ENCODE measurements at regions of chr17 and their contacts with region 1.

Region 1: DNA sequence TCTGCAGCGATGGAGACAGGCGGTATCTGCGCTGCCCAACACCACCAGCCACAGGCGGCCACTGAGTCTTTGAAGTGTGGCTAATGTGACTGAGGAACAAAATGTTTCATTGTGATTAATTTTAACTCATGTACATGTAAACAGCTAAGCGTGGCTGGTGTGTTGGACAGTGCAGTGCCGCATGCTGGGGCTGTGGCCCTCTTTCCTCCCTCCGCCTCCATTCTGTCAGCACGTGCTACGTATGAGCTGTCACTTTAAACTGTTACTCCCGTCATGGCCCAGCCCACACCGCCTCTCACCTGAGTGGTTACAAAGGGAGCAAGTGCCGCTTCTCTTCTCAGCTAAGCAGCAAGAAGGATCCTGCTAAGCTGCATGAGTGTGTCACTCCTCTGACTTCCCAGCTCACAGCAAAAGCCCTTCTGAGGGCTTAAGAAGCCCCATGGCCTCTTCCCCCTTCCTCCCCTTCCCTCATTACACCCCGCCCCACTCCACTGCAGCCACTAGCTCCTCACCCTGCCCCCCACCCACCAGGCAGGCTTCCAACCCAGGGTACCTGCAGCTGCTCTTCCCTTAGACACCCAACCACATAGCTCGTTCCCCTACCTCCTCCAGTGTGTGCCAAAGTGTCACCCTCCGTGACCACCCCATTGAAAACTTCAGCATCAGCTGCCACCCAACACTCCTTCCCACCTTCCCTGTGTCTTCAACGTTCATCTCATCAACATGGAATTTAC is 15.0 kb downstream of the HASPIN start:
- DNase-seq: no peak
- CTCF ChIP-seq: no peak

Region 2: DNA sequence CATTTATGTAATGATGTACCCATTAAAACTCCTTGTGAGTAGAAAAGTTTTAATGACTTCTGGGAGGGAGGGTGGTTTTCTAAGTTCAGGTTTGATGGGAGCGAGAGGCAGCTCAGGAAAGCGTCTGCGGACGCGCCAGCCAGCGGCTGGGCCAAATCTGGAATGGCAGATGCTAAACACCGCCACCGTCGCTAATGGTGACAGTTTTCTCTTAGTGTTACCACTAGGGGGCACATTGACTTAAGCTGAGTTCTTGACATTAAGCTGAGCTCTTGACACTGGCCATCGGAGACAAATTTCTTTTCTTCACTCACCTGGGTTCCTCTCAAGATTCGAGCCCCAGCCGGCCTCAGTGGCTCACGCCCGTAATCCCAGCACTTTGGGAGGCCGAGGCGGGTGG is 136.2 kb before region 1 on chr17:
- CTCF ChIA-PET with region 1: no interaction called
- POLR2A ChIA-PET with region 1: no interaction called
- DNase-seq: no peak
- CTCF ChIP-seq: peak; percentile 43

Region 3: DNA sequence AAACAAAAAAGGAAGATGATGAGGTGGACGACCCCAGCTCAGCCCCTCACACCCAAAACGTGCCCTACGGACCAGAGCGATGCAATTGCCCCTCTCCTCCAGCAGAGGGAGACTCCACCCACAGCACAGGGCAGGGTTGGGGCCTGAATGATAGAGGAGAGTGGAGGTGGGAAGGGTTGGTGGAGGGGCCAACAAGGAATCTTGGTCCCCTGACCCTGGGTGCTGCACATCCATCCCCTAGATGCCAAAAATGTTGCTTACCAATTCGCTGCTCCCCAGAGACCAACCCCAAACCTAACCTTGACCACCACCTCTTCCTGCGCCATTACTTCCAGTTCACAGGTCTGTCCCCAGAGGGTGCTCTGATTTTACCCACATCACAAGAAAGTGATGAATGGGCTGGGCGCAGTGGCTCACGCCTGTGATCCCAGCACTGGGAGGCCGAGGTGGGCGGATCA is 55.6 kb before region 1 on chr17:
- CTCF ChIA-PET with region 1: interaction called, 11 read pairs
- POLR2A ChIA-PET with region 1: no interaction called
- DNase-seq: peak; percentile 84
- CTCF ChIP-seq: peak; percentile 96

Region 4: DNA sequence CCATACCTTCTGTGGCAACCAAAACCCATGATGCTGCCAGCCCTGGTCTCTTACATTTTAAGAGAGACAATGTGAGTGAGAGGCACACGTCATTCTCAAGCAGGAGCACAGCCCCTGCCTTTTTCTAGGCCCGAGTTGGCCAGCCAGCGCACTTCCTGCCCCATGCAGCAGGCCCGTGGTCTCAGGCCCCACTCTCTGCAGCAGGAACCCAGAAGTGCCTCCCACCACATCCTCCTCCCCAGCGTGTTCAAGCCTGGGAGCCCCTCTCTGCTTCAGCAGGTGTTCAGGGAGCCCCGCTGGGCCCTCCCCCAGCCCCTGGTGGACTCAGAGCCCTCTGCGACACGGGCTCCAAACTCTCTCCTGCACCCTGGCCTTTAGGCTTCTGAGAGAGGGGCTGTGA is 31.7 kb after region 1 on chr17:
- CTCF ChIA-PET with region 1: interaction called, 13 read pairs
- POLR2A ChIA-PET with region 1: no interaction called
- DNase-seq: peak; percentile 52
- CTCF ChIP-seq: no peak

Region 5: DNA sequence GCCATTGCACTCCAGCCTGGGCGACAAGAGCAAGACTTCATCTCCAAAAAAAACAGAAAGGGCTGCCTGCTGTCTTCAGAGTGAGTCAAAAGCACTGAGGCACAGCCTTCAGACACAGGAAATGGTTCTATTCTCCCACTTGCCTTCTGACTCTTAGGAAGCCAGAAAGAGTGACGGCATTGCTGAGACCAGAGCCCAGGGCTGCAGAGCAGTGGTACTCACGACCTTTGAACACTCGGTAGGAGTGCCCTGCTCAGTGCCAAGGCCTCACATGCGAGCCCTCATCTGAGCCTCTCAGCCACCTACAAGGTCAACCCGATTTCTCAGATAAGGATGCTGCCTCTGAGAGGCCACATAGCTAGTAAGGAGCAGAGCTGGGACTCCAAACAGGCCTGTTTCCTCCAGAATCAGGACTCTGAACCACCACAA is 65.8 kb after region 1 on chr17:
- CTCF ChIA-PET with region 1: interaction called, 43 read pairs
- POLR2A ChIA-PET with region 1: no interaction called
- DNase-seq: peak; percentile 78
- CTCF ChIP-seq: no peak

Region 6: DNA sequence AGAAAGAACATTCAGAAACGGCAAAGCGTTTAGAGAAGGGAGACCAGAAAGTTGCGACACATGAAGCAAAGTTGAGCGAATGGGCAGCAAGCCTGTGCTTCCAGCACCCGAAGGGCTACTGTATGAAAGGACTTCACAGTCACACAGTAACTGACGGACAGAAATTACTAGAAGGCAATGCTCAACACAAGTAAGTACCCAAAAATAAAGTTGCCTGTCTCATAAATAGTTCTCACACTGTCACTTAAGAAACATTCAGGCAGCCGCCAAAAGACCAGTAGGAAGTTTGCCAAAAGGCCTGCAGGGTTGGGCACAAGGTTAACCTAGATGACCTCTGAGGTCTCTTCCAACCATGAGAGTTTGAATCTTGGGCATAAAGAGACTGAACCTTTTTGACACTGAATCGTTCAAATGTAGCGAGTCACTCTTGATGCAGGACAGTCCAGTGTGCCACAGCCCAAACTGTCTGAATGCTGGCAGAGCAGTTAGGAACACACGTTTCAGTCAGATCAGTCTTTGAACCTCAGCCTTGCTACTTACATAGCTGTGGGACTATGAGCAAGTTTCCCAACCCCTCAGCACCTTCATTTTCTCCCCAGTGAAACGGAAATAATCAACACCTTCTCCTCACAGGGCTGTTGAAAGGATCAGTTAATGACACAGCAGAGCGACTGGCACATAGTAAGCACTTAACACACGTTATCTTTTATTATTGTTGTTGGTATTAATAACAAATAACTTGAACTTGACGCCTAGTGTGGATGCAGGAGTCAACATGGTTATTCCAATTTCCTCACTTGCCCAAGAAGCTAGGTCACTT is 96.9 kb after region 1 on chr17:
- CTCF ChIA-PET with region 1: interaction called, 217 read pairs
- POLR2A ChIA-PET with region 1: no interaction called
- DNase-seq: no peak
- CTCF ChIP-seq: no peak